Mammary epithelial cell (primary cell): ENCODE measurements at regions of chr10 and their contacts with region 1.

Region 1: GRCh38 chr10:112140110-112140970 is 43.2 kb downstream of the GPAM start:
- DNase-seq: peak; percentile 64
- H3K4me3 ChIP-seq: no peak overlapping the region
- H3K27ac ChIP-seq: no peak overlapping the region
- H3K4me1 ChIP-seq: no peaks in the 10 kb centered on the region
- H3K27me3 ChIP-seq: no peaks in the 10 kb centered on the region
- CTCF ChIP-seq: peak; percentile 90 to 91

Region 2: GRCh38 chr10:110336111-110336721 is 1804.1 kb before region 1 on chr10:
- CTCF ChIA-PET with region 1: no interaction called
- dilution Hi-C with region 1: no loop called
- in situ Hi-C with region 1: loop called in 1 of 2 experiments (anchors 25 kb)
- intact Hi-C with region 1: no loop called
- DNase-seq: peak; percentile 87
- H3K4me3 ChIP-seq: no peak overlapping the region
- H3K27ac ChIP-seq: peak overlapping the region; percentile 13
- H3K4me1 ChIP-seq: peaks cover 16% of the 10 kb centered on the region
- H3K27me3 ChIP-seq: no peaks in the 10 kb centered on the region
- CTCF ChIP-seq: peak in 1 of 2 donors; percentile 23

Region 3: GRCh38 chr10:111076191-111076681 is 1064.1 kb before region 1 on chr10:
- CTCF ChIA-PET with region 1: interaction called, 9 read pairs
- dilution Hi-C with region 1: no loop called
- in situ Hi-C with region 1: loop called in 1 of 2 experiments (anchors 25 kb)
- intact Hi-C with region 1: loop called (anchors 5 kb)
- DNase-seq: peak; percentile 37
- H3K4me3 ChIP-seq: peak overlapping the region; percentile 45 to 56 (median 46)
- H3K27ac ChIP-seq: no peak overlapping the region
- H3K4me1 ChIP-seq: peaks cover 21% of the 10 kb centered on the region
- H3K27me3 ChIP-seq: peaks cover 32% of the 10 kb centered on the region
- CTCF ChIP-seq: peak; percentile 55 to 86

Region 4: GRCh38 chr10:112071596-112072133 is 68.7 kb before region 1 on chr10:
- CTCF ChIA-PET with region 1: no interaction called
- dilution Hi-C with region 1: no loop called
- in situ Hi-C with region 1: no loop called
- intact Hi-C with region 1: no loop called
- DNase-seq: peak; percentile 1
- H3K4me3 ChIP-seq: no peak overlapping the region
- H3K27ac ChIP-seq: no peak overlapping the region
- H3K4me1 ChIP-seq: no peaks in the 10 kb centered on the region
- H3K27me3 ChIP-seq: no peaks in the 10 kb centered on the region
- CTCF ChIP-seq: no peak

Region 5: DNA sequence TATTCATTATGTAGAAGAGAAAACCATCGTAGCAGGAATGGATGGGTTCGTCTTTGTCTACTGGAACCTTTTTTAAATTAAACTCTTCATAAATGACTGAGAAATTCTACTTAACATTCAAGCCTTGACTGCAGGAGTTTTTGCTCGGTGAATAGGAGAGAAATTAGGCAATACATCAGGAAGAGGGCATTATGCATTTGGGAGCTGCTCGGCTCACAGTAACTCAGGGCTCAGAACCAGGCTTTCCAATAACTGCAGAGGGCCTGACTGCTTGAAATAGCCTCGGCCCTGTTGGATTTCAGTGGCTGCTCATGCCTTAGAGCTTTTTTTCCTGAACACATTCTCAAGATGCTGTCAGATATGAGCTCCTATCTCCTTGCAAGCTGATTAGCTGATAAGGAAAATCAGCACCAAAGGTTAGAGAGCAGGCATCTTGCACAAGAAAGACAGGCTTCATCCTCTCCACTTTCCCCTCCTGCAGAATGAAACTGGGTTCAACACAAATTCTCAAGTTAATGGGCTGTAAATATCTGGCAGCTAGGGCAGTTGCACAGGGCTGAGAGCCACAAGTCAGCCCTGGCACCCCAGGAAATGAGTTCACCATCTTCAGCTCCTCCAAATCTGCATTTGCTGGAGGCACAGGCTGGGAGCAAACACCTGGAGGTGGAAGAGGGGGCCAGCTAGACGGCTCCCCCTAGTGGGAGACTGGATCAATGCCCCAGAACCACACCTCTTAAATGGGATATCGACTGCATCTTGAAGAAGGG is 167.2 kb after region 1 on chr10:
- CTCF ChIA-PET with region 1: no interaction called
- dilution Hi-C with region 1: loop called (anchors 25 kb)
- in situ Hi-C with region 1: no loop called
- intact Hi-C with region 1: loop called (anchors 1 kb)
- DNase-seq: peak; percentile 38
- H3K4me3 ChIP-seq: no peak overlapping the region
- H3K27ac ChIP-seq: no peak overlapping the region
- H3K4me1 ChIP-seq: no peaks in the 10 kb centered on the region
- H3K27me3 ChIP-seq: peaks cover 2% of the 10 kb centered on the region
- CTCF ChIP-seq: peak; percentile 88 to 96

Region 6: DNA sequence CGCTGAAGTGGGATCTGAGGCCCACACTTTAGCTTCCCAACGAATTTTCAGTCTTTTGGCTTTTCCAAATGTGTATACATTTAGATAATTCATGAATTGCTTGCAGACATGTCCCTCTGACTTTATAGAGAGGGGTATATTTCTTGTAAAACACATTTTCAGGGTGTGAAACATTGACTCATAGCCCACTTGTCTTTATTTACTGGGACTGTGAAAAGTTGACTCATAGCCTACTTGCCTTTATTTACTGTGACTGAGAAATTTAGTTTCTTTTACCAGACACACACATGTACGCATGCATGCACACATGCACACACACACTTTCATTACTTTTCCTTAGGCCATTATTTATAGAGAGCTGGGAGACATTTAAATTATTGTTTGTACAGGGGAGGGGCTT is 385.8 kb after region 1 on chr10:
- CTCF ChIA-PET with region 1: no interaction called
- dilution Hi-C with region 1: no loop called
- in situ Hi-C with region 1: no loop called
- intact Hi-C with region 1: no loop called
- DNase-seq: no peak
- H3K4me3 ChIP-seq: no peak overlapping the region
- H3K27ac ChIP-seq: no peak overlapping the region
- H3K4me1 ChIP-seq: peaks cover 17% of the 10 kb centered on the region
- H3K27me3 ChIP-seq: no peaks in the 10 kb centered on the region
- CTCF ChIP-seq: no peak